Endothelial cell of umbilical vein (primary cell): ENCODE measurements at regions of chr21 and their contacts with region 1.

Region 1: DNA sequence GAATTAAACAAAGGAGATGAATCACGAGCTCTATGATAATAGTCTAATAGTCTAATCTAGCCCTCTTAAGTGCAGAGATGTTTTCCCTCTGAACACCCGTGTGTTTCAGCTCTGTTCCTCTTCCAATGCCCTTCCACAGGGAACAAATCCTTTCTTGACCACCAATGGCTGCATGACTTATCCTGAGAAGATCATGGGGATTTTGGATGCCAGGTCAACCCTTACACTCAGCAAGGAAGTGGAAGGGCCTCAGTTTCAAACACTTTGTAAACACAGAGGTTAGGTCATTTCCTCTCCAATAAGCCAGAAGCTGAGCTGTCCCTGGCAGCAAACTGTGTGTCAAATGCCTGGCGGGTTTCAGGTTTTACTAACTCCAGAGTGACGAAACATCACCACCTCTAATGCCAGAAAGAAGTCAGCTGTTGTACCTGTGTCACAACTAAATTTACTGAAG is 200.0 kb downstream of the GABPA start:
- DNase-seq: peak; percentile 97
- H3K4me3 ChIP-seq: no peak overlapping the region
- H3K27ac ChIP-seq: peak overlapping the region; percentile 90
- H3K4me1 ChIP-seq: peaks cover 93% of the 10 kb centered on the region
- H3K27me3 ChIP-seq: no peaks in the 10 kb centered on the region
- CTCF ChIP-seq: no peak
- POLR2A ChIP-seq: no peak

Region 2: GRCh38 chr21:25518491-25518911 is 416.3 kb before region 1 on chr21:
- CTCF ChIA-PET with region 1: no interaction called
- POLR2A ChIA-PET with region 1: no interaction called
- dilution Hi-C with region 1: no loop called
- intact Hi-C with region 1: no loop called
- DNase-seq: no peak
- H3K4me3 ChIP-seq: no peak overlapping the region
- H3K27ac ChIP-seq: no peak overlapping the region
- H3K4me1 ChIP-seq: no peaks in the 10 kb centered on the region
- H3K27me3 ChIP-seq: no peaks in the 10 kb centered on the region
- CTCF ChIP-seq: no peak
- POLR2A ChIP-seq: no peak

Region 3: GRCh38 chr21:25953659-25954058 is 18.9 kb after region 1 on chr21:
- CTCF ChIA-PET with region 1: interaction called, 4 read pairs
- POLR2A ChIA-PET with region 1: no interaction called
- dilution Hi-C with region 1: no loop called
- intact Hi-C with region 1: loop called (anchors 1 kb)
- DNase-seq: peak; percentile 87
- H3K4me3 ChIP-seq: no peak overlapping the region
- H3K27ac ChIP-seq: peak overlapping the region; percentile 88
- H3K4me1 ChIP-seq: peaks cover 55% of the 10 kb centered on the region
- H3K27me3 ChIP-seq: no peaks in the 10 kb centered on the region
- CTCF ChIP-seq: no peak
- POLR2A ChIP-seq: peak; percentile 52